AG04450 (cell line): ENCODE measurements at regions of chr4 and their contacts with region 1.

Region 1: DNA sequence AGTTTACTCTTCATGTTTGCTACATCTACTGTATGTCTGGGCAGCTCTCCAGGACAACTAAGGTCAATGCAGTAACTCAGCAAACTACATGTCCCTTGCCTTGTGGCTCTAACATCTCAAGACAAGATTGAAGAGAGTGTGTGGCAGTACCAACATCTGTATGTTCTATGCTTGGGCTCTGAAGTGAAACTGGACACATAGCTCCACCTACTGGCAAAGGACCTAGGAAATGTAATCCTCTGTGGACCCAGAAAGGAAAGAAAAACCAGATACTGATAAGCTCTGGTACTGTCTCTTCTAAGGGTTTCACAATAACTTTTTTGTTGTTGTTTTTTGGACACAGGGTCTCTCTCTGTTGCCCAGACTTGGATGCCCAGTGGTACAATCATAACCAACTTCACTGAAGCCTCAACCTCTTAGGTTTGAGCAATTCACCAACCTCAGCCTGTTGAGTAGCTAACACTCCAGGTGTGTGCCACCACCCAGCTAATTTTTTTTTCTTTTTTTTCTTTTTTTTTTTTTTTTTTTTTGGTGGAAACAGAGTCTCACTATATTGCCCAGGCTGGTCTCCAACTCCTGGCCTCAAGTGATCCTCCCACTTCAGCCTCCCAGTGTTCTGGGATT is 64.1 kb downstream of the QDPR start:
- DNase-seq: peak; percentile 50
- H3K4me3 ChIP-seq: no peak overlapping the region
- H3K27ac ChIP-seq: no peak overlapping the region
- H3K27me3 ChIP-seq: no peaks in the 10 kb centered on the region
- CTCF ChIP-seq: peak; percentile 84

Region 2: GRCh38 chr4:16289897-16290554 is 1157.8 kb before region 1 on chr4:
- CTCF ChIA-PET with region 1: interaction called, 46 read pairs
- POLR2A ChIA-PET with region 1: no interaction called
- DNase-seq: no peak
- H3K4me3 ChIP-seq: no peak overlapping the region; the same call in 1 of the 2 replicates
- H3K27ac ChIP-seq: no peak overlapping the region
- H3K27me3 ChIP-seq: peaks cover 9% of the 10 kb centered on the region
- CTCF ChIP-seq: peak; percentile 65

Region 3: DNA sequence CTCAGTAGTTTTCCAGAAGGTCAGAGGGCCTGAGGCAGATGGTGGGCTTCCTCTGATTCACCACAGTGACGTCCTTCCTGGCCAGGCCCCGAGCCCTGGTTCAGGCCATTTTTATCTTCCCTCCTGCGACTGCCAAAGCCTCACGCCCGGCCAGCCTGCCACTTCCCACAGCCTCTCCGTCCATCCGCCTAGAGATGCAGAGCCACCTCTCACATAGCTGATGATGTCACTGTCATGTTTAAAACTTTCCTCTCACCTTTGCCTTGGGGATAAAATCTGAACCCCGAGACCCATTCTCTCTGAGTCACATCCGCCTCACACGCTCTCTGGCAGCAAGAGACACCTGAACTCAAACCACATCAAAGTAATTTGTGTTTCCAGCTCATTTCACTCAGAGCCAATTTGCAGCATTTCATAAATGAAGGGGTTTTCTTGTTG is 111.2 kb before region 1 on chr4:
- CTCF ChIA-PET with region 1: interaction called, 14 read pairs
- POLR2A ChIA-PET with region 1: no interaction called
- DNase-seq: no peak
- H3K4me3 ChIP-seq: no peak overlapping the region
- H3K27ac ChIP-seq: no peak overlapping the region
- H3K27me3 ChIP-seq: no peaks in the 10 kb centered on the region
- CTCF ChIP-seq: no peak

Region 4: GRCh38 chr4:17427991-17428390 is 19.8 kb before region 1 on chr4:
- CTCF ChIA-PET with region 1: interaction called, 11 read pairs
- POLR2A ChIA-PET with region 1: no interaction called
- DNase-seq: no peak
- H3K4me3 ChIP-seq: no peak overlapping the region
- H3K27ac ChIP-seq: no peak overlapping the region
- H3K27me3 ChIP-seq: peaks cover 8% of the 10 kb centered on the region
- CTCF ChIP-seq: no peak

Region 5: DNA sequence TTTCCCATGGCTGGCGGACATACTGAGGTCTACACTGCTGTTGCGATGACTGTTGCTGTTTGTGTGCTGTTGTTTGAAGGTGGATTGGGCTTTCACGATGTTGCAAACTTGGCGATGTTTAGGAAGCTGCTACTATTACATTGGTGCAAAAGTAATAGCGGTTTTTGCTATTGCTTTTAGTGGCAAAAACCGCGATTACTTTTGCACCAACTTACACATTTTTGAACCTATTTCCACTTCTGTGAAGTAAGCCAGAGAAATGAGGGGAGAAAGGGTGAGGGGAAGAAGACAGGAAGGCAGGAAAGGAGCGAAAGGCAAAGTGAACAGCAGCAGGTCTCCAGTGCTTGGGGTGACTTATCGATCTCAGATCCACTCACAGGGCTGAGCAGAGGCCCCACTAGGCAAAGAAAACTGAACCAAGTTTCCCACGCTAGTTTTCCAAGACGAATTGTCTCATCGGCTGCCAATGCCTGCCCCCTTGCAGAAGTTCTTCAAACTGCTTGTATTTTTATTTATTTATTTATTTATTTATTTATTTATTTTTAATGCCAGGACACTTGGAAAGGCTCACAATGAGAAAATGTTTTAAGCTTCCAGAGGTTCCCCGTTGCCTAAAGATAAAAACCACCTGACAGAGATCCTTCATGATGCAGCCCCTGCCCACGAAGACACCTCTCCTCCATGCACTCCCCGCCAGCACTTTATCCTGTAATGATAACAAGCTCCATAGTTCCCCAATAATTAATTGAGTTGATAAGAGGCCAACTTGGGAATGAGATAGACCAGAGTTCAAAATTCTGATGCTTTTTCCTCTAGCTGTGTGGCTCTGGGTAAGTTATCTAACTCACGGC is 20.8 kb after region 1 on chr4:
- CTCF ChIA-PET with region 1: interaction called, 141 read pairs
- POLR2A ChIA-PET with region 1: no interaction called
- DNase-seq: no peak
- H3K4me3 ChIP-seq: no peak overlapping the region
- H3K27ac ChIP-seq: no peak overlapping the region
- H3K27me3 ChIP-seq: no peaks in the 10 kb centered on the region
- CTCF ChIP-seq: peak; percentile 67